Dendritic cell treated with granulocyte-macrophage colony-stimulating factor and Interleukin-4, amounts not matched to agents 40 ng/mL and 50 ng/mL, for 4 days (primary cell): ENCODE measurements at regions of chr6 and their contacts with region 1.

Region 1: DNA sequence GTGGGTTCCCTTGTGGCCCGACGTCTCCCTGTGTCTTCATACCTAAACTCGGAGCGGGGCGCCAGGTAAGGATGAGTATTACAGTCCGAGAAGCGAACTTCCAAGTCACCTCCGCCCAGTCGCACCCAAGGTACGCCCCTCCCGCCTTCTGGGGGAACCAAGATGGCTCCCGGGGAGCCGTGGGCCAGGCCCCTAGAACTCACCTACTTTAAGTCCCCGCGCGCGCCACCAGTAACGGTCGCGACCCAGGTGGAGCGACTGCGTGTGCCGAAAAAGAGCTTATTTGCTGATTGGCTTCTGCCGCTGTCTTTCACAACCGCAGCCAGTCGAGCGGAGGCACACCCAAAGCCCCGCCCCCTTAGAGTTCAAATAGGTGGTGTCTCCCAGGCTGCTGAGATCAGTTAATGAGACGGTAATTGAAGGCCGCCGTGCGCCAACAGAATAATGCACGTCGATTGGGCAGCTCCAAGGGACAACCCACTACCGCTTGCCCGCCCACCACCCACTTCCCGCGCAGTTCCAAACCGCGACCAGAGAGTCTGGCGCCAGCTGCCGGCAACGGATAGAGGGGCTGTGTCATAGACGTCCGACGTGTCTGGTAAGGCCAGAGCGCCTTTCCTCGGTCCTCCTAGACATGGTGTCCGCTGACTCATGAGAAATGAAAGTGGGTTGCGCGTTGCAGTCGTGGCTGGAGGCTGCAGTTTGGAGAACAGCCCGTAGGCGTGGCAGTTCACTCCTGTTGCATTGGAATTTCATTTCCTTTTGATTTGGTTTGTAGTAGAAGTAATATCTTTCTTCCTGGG is at the start of gene MDC1:
- H3K4me3 Mint-ChIP-seq: peak within 1 kb of the TSS; percentile 90
- H3K27ac Mint-ChIP-seq: peak within 1 kb of the TSS; percentile 98
- H3K4me1 Mint-ChIP-seq: peaks cover 50% of the 10 kb centered on the region
- H3K27me3 Mint-ChIP-seq: no peaks in the 10 kb centered on the region

Region 2: DNA sequence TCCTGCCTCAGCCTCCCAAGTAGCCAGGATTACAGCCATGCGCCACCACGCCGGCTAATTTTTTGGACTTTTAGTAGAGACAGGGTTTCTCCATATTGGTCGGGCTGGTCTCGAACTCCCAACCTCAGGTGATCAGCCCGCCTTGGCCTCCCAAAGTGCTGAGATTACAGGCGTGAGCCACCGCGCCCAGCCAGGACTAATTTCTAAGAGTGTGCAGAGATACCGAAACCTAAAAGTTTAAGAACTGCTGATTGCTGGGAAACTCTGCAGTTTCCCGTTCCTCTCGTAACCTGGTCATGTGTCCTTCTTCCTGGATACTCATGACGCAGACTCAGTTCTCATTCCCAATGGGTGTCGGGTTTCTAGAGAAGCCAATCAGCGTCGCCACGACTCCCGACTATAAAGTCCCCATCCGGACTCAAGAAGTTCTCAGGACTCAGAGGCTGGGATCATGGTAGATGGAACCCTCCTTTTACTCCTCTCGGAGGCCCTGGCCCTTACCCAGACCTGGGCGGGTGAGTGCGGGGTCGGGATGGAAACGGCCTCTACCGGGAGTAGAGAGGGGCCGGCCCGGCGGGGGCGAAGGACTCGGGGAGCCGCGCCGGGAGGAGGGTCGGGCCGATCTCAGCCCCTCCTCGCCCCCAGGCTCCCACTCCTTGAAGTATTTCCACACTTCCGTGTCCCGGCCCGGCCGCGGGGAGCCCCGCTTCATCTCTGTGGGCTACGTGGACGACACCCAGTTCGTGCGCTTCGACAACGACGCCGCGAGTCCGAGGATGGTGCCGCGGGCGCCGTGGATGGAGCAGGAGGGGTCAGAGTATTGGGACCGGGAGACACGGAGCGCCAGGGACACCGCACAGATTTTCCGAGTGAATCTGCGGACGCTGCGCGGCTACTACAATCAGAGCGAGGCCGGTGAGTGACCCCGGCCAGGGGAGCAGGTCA is 227.9 kb before region 1 on chr6 and contains the start of gene HLA-E:
- intact Hi-C with region 1: loop called (anchors 10 kb)
- H3K4me3 Mint-ChIP-seq: peak within 1 kb of the TSS; percentile 97
- H3K27ac Mint-ChIP-seq: peak within 1 kb of the TSS; percentile 98
- H3K4me1 Mint-ChIP-seq: peaks cover 49% of the 10 kb centered on the region
- H3K27me3 Mint-ChIP-seq: peaks cover 4% of the 10 kb centered on the region

Region 3: GRCh38 chr6:30678964-30679726 is 38.1 kb before region 1 on chr6:
- intact Hi-C with region 1: loop called (anchors 1 kb)
- H3K4me3 Mint-ChIP-seq: peak overlapping the region; percentile 93
- H3K27ac Mint-ChIP-seq: peak overlapping the region; percentile 91
- H3K4me1 Mint-ChIP-seq: peaks cover 56% of the 10 kb centered on the region
- H3K27me3 Mint-ChIP-seq: no peaks in the 10 kb centered on the region

Region 4: GRCh38 chr6:30686908-30687658 is 30.2 kb before region 1 on chr6:
- intact Hi-C with region 1: loop called (anchors 1 kb)
- H3K4me3 Mint-ChIP-seq: peak overlapping the region; percentile 93
- H3K27ac Mint-ChIP-seq: peak overlapping the region; percentile 91
- H3K4me1 Mint-ChIP-seq: peaks cover 56% of the 10 kb centered on the region
- H3K27me3 Mint-ChIP-seq: no peaks in the 10 kb centered on the region

Region 5: GRCh38 chr6:30700340-30700739 is 16.9 kb before region 1 on chr6:
- intact Hi-C with region 1: no loop called
- H3K4me3 Mint-ChIP-seq: no peak overlapping the region
- H3K27ac Mint-ChIP-seq: peak overlapping the region; percentile 75
- H3K4me1 Mint-ChIP-seq: peaks cover 39% of the 10 kb centered on the region
- H3K27me3 Mint-ChIP-seq: no peaks in the 10 kb centered on the region

Region 6: DNA sequence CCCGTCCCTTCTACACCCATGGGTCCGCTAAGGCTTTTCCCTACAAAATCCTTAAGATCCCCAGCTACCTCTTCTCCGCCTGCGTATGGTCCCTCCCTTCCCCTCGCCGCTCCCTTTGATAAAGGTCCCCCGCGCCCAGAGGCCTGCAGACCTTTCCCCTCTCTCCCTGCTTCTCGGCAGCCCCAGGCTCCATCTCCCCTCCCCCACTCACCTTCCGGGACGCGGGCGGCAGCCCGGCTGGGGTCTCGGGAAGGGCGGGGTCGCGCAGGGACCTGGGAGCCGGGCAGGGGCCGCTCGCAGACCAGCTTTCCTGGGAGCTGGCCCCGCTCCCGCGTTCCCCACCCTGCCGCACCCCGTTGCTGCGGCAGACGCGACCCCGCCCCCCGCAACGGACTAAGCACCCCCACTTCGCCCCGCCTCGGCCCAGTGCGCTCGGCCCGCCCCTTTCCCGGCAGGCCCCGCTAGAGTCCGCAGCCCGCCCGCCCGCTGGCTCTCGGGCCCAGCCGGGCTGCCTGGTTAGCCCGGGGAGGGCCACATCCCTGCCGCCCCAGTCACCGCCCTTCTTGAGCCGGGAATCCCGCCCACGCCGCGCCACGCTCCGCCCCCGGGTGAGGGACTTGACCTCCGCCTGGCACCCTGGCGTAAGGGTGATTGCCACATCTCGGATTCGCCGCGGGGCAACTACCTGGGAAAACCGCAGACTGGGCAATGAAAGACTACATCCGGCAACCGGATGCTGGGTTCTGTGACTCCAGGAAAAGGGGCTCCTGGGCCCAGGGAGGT is 25.3 kb after region 1 on chr6 and contains the start of gene FLOT1:
- intact Hi-C with region 1: loop called (anchors 2 kb)
- H3K4me3 Mint-ChIP-seq: peak within 1 kb of the TSS; percentile 98
- H3K27ac Mint-ChIP-seq: peak within 1 kb of the TSS; percentile 99
- H3K4me1 Mint-ChIP-seq: peaks cover 67% of the 10 kb centered on the region
- H3K27me3 Mint-ChIP-seq: peaks cover 4% of the 10 kb centered on the region

Region 7: DNA sequence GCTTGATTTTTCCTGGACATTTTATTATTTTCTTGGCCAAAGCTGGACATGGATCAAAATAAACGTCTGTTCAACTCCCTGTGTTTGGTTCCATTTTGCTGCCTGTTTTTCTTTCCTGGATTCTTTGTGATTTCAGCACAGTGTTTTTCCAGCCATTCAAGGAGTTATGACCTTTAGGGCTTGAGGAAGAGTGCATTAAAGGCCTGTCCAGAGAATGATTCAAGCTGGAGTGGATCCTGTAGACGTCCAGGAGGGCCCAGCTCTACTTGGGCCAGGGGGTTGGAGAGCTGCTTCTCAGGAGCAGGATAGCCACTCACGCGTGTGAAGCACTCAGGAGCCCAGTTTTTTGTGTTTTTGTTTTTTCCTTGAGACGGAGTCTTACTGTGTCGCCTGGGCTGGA is 83.6 kb after region 1 on chr6:
- intact Hi-C with region 1: no loop called
- H3K4me3 Mint-ChIP-seq: no peak overlapping the region
- H3K27ac Mint-ChIP-seq: no peak overlapping the region
- H3K4me1 Mint-ChIP-seq: peaks cover 24% of the 10 kb centered on the region
- H3K27me3 Mint-ChIP-seq: no peaks in the 10 kb centered on the region